Endothelial cell of umbilical vein (primary cell): ENCODE measurements at regions of chr22 and their contacts with region 1.

Region 1: GRCh38 chr22:21867528-21868266 is at the start of gene MAPK1:
- DNase-seq: peak; percentile 92
- H3K4me3 ChIP-seq: peak within 1 kb of the TSS; percentile 58 to 86 (median 85)
- H3K27ac ChIP-seq: peak within 1 kb of the TSS; percentile 77
- H3K4me1 ChIP-seq: peaks cover 18% of the 10 kb centered on the region
- H3K27me3 ChIP-seq: no peaks in the 10 kb centered on the region
- CTCF ChIP-seq: peak in 1 of 2 donors; percentile 50
- POLR2A ChIP-seq: peak; percentile 93
- total RNA-seq, gene MAPK1: 155 and 163 TPM in 2 replicates

Region 2: GRCh38 chr22:21735200-21736076 is 132.3 kb before region 1 on chr22 and contains the start of gene YPEL1:
- CTCF ChIA-PET with region 1: no interaction called
- POLR2A ChIA-PET with region 1: no interaction called
- dilution Hi-C with region 1: no loop called
- intact Hi-C with region 1: loop called (anchors 5 kb)
- DNase-seq: peak; percentile 98
- H3K4me3 ChIP-seq: peak within 1 kb of the TSS; percentile 48 to 66 (median 52)
- H3K27ac ChIP-seq: no peak within 1 kb of the TSS
- H3K4me1 ChIP-seq: peaks cover 7% of the 10 kb centered on the region
- H3K27me3 ChIP-seq: peaks cover 0 to 7% of the 10 kb centered on the region in 2 experiments
- CTCF ChIP-seq: no peak
- POLR2A ChIP-seq: no peak
- total RNA-seq, gene YPEL1: 6.2 and 6.5 TPM in 2 replicates

Region 3: DNA sequence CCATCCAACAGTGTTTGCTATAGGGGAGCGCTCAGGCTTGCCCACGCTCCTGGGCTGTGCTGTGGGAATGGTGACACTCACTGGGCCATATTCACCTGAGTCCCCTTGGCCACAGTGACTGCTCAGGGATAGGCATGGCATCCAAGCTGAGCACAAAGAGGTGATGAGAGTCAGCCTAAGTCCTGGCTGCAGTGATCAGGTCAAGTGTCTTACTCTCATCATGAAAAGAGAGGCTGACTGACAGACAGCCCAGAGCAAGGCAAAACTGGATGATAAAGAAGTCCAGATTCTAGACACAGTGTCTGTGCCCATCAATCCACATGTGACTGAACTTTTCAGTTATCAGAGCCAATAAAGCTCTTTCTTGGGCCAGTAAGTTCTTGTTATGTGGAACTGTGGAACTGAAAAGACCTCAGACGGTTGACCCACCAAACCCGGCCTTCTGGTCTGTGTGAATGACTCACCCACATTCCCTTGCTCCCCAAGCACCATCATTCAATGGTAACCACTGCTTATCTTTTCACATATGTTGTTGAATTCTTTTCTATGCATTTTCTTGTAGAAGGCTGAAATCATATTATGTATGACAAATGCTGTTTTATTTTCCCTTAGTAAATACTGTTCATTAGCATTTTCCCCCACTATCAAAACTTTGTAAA is 88.9 kb before region 1 on chr22:
- CTCF ChIA-PET with region 1: interaction called, 3 read pairs
- POLR2A ChIA-PET with region 1: no interaction called
- dilution Hi-C with region 1: no loop called
- intact Hi-C with region 1: loop called (anchors 5 kb)
- DNase-seq: no peak
- H3K4me3 ChIP-seq: no peak overlapping the region
- H3K27ac ChIP-seq: no peak overlapping the region
- H3K4me1 ChIP-seq: no peaks in the 10 kb centered on the region
- H3K27me3 ChIP-seq: no peaks in the 10 kb centered on the region
- CTCF ChIP-seq: no peak
- POLR2A ChIP-seq: no peak

Region 4: DNA sequence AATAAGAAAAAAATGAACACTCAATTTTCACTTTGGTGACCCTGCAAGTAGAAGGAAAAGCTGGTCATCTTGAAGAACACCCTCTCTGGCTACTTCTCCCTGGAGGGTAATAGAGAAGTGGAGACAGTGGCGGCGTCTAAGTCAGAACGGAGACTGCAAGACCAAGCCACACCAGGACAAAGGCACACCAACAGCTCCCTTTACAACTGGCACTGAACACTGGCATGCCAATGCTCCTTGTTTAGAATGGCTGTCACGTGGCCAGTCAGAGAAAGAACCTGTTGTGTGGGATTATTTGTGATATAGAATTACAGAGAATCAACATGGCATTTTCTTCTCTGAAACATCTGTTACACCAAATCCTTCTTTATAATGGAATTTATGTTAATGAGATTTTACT is 70.8 kb before region 1 on chr22:
- CTCF ChIA-PET with region 1: interaction called, 8 read pairs
- POLR2A ChIA-PET with region 1: interaction called, 4 read pairs
- dilution Hi-C with region 1: no loop called
- intact Hi-C with region 1: loop called (anchors 1 kb)
- DNase-seq: no peak
- H3K4me3 ChIP-seq: no peak overlapping the region
- H3K27ac ChIP-seq: no peak overlapping the region
- H3K4me1 ChIP-seq: peaks cover 20% of the 10 kb centered on the region
- H3K27me3 ChIP-seq: no peaks in the 10 kb centered on the region
- CTCF ChIP-seq: no peak
- POLR2A ChIP-seq: no peak

Region 5: GRCh38 chr22:21816787-21817496 is 50.8 kb before region 1 on chr22:
- CTCF ChIA-PET with region 1: no interaction called
- POLR2A ChIA-PET with region 1: no interaction called
- dilution Hi-C with region 1: no loop called
- intact Hi-C with region 1: loop called (anchors 5 kb)
- DNase-seq: peak; percentile 95
- H3K4me3 ChIP-seq: peak overlapping the region in 1 of 3 experiments; percentile 29
- H3K27ac ChIP-seq: peak overlapping the region; percentile 96
- H3K4me1 ChIP-seq: peaks cover 32% of the 10 kb centered on the region
- H3K27me3 ChIP-seq: no peaks in the 10 kb centered on the region
- CTCF ChIP-seq: no peak
- POLR2A ChIP-seq: no peak

Region 6: DNA sequence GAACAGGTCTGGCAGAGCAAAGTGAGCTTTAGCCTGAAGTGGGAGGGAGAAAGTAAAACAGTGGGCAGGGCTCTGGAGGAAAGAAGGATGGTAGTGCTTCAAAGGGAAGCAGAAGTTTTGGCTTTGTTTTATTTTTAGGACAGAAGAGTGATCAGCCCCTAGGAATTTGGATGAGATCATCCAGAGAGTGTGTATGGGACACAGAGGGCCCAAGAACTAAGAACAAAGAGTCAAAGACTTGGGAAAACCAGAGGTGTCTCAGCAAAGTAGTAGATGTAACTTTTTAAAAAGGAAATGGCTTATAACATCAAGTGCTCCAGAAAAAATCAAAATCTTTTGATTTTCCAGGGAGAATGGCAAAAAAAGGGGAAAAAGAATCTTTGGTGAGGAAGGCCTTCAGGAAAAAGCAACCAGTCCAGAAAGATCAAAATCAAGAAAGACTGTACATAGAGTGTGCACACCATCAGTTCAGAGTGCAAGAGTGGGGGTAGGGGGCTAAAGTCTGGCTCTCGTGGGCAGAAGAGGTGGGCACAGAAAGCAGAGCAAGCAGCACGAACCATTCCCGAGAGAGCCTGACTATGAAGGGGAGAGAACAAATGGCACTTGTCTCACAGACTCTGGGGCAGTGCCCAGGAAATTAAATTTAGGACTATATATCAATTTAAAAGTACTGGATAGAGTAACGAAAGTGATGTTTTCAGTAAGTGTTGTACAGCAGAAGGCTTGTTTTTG is 30.3 kb before region 1 on chr22:
- CTCF ChIA-PET with region 1: interaction called, 3 read pairs
- POLR2A ChIA-PET with region 1: no interaction called
- dilution Hi-C with region 1: no loop called
- intact Hi-C with region 1: loop called (anchors 1 kb)
- DNase-seq: peak; percentile 72
- H3K4me3 ChIP-seq: peak overlapping the region in 1 of 3 experiments; percentile 10
- H3K27ac ChIP-seq: peak overlapping the region; percentile 98
- H3K4me1 ChIP-seq: peaks cover 13% of the 10 kb centered on the region
- H3K27me3 ChIP-seq: no peaks in the 10 kb centered on the region
- CTCF ChIP-seq: no peak
- POLR2A ChIP-seq: no peak